BJ (cell line): ENCODE measurements at regions of chr7 and their contacts with region 1.

Region 1: DNA sequence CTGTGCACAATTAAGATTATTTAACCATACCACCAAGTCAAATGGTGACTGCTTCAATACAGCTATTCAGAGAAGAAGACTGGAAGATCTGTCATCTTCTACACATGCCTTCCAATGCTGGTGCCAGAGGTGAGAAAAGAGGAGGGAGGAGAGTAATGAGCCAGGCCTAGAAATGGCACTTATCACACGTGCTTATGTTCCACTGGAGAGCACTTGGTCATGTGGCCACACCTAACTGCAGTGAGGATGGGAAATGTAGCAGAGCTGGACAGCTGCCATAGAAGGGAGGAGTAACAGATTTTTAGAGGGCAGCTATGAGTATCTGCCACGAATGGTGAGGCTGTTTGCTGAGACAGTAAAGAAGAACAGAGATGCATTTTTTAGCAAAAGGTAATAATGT is 77.1 kb downstream of the MPLKIP start:
- DNase-seq: no peak
- H3K4me3 ChIP-seq: no peak overlapping the region
- H3K27me3 ChIP-seq: no peaks in the 10 kb centered on the region
- CTCF ChIP-seq: no peak

Region 2: GRCh38 chr7:39761449-39761848 is 295.8 kb before region 1 on chr7:
- CTCF ChIA-PET with region 1: no interaction called
- POLR2A ChIA-PET with region 1: no interaction called
- DNase-seq: no peak
- H3K4me3 ChIP-seq: no peak overlapping the region
- H3K27me3 ChIP-seq: no peaks in the 10 kb centered on the region
- CTCF ChIP-seq: no peak

Region 3: GRCh38 chr7:39894904-39895303 is 162.4 kb before region 1 on chr7:
- CTCF ChIA-PET with region 1: interaction called, 147 read pairs
- POLR2A ChIA-PET with region 1: interaction called, 6 read pairs
- DNase-seq: no peak
- H3K4me3 ChIP-seq: no peak overlapping the region
- H3K27me3 ChIP-seq: peaks cover 10% of the 10 kb centered on the region
- CTCF ChIP-seq: no peak

Region 4: GRCh38 chr7:40041456-40041855 is 15.8 kb before region 1 on chr7:
- CTCF ChIA-PET with region 1: interaction called, 34 read pairs
- POLR2A ChIA-PET with region 1: no interaction called
- DNase-seq: no peak
- H3K4me3 ChIP-seq: no peak overlapping the region
- H3K27me3 ChIP-seq: no peaks in the 10 kb centered on the region
- CTCF ChIP-seq: no peak

Region 5: GRCh38 chr7:40077849-40078248 is 20.6 kb after region 1 on chr7:
- CTCF ChIA-PET with region 1: no interaction called
- POLR2A ChIA-PET with region 1: no interaction called
- DNase-seq: no peak
- H3K4me3 ChIP-seq: no peak overlapping the region
- H3K27me3 ChIP-seq: no peaks in the 10 kb centered on the region
- CTCF ChIP-seq: no peak

Region 6: GRCh38 chr7:40827217-40828085 is 770.2 kb after region 1 on chr7:
- CTCF ChIA-PET with region 1: no interaction called
- POLR2A ChIA-PET with region 1: no interaction called
- DNase-seq: no peak
- H3K4me3 ChIP-seq: no peak overlapping the region
- H3K27me3 ChIP-seq: no peaks in the 10 kb centered on the region
- CTCF ChIP-seq: no peak